ENCODE measurements at regions of chr2 and their contacts with region 1.

Region 1: DNA sequence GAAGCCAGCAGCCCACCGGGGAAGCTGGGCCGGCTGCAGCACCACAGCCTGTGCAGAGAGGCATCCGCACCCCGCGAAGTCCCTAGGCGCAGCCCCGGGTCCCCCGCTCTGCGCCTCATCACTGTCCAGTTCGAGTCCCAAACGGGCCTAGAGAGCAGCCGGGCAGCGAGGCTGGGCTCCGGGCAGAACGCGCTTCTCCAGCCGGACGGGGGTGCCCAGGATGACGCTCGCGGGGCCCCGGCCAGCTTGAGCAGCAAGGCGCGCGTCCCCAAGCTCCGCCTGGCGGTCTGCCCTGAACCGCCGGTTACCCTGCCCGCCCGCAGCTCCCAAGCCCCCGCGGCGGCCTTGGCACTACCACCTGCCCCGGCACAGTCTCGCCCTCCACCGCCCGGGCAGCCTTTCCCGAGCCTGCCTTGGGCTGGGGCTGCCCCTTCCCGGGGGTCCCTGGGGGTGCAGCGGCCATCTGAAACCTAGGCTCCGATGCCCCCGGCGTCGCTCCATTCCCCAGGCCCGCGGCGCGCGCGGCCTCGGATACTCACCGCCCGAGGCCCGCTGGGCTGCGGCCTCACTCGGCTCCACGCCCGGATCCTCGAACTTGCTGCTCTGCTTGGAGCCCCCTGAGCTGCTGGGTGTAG is 591 bp downstream of the SLC16A14 start:
- DNase-seq: peak; percentile 65 to 83 (median 76)
- H3K4me3 ChIP-seq: peak overlapping the region; percentile 61 to 81 (median 77)
- H3K27ac ChIP-seq: peak overlapping the region in 1 of 2 experiments; percentile 7
- H3K4me1 ChIP-seq: peaks cover 5 to 27% (median 22%) of the 10 kb centered on the region in 4 experiments
- H3K27me3 ChIP-seq: peaks cover 0 to 3% (median 0%) of the 10 kb centered on the region in 5 experiments

Region 2: DNA sequence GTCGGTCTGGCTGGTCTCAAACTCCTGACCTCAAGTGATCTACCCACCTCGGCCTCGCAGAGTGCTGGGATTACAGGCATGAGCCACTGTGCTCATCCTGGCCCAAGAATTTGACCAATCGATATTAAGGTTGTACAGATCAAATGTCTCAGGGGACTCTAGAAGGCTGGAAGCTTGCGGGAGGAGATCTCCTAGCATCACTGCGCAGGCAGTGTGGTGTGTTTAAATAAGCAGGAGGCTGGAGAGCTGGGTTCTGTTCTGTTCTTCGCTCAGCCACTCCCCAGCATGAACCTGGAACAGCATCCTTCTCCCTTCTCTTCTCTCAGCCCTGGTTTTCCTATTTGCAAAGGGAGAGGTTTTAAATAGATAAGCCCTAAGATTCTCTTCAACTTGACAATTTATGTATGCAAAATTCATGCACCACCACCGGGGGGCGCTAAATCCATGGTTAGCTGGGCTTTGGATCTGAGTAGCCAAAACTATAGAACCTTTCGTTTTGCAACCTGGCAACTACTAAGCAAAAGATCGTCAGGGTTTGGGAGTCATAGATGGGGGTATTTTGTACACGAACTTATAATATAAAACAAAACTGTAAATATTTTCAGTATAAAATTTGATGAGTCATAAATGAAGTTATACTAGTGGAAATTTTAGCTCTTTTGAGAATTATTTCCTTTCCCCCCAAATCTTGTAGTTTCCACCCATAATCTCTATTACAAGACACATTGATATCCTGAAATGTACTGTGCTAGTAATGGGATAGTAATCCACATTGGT is 60.0 kb before region 1 on chr2:
- CTCF ChIA-PET with region 1: interaction called, 29 read pairs
- POLR2A ChIA-PET with region 1: no interaction called
- DNase-seq: peak; percentile 79 to 90 (median 84)
- H3K4me3 ChIP-seq: peak overlapping the region in 1 of 7 experiments; percentile 39
- H3K27ac ChIP-seq: peak overlapping the region in 1 of 2 experiments; percentile 1
- H3K4me1 ChIP-seq: peaks cover 0 to 8% (median 3%) of the 10 kb centered on the region in 4 experiments
- H3K27me3 ChIP-seq: no peaks in the 10 kb centered on the region

Region 3: GRCh38 chr2:230023309-230023708 is 44.8 kb before region 1 on chr2:
- CTCF ChIA-PET with region 1: interaction called, 10 read pairs
- POLR2A ChIA-PET with region 1: interaction called, 7 read pairs
- DNase-seq: no peak
- H3K4me3 ChIP-seq: no peak overlapping the region
- H3K27ac ChIP-seq: no peak overlapping the region
- H3K4me1 ChIP-seq: no peaks in the 10 kb centered on the region
- H3K27me3 ChIP-seq: no peaks in the 10 kb centered on the region

Region 4: DNA sequence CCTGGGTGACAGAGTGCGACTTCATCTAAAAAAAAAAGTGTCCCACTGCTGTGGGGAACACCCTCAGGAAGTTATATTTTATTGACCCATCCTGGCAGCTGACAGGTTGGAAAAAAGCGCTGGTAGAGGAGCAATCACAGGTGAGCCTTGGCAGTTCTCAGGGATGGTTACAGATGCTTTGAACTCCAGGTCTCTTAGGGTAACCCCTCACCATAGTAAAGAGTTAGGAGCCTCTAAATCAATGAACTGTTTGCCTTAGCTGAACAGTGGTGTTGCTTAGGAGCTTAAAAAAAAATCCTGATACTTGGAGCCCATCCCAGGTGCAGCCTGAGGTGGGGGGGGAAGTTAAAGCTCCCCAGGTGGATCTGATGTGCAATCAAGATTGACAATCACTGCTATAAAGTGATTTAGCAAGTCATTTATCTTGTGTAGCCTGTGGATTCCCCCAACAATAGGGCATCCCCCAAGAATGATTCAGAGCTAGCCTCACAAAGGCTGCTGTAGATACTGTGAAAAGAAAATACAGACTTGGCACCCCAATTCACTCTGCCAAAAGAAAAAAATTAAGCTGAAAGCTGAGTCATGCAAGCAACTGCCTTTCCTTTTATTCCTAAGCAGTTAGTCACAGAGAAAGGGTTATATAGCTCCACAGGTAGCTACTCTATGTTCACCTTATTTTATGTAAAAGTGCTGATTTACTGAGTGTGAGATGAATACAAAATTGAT is 14.2 kb before region 1 on chr2:
- CTCF ChIA-PET with region 1: interaction called, 16 read pairs
- POLR2A ChIA-PET with region 1: interaction called, 3 read pairs
- DNase-seq: peak; percentile 50 to 91 (median 89)
- H3K4me3 ChIP-seq: peak overlapping the region in 1 of 7 experiments; percentile 38
- H3K27ac ChIP-seq: no peak overlapping the region
- H3K4me1 ChIP-seq: peaks cover 0 to 22% (median 14%) of the 10 kb centered on the region in 4 experiments
- H3K27me3 ChIP-seq: no peaks in the 10 kb centered on the region

Region 5: GRCh38 chr2:230124757-230125431 is 56.8 kb after region 1 on chr2:
- CTCF ChIA-PET with region 1: interaction called, 16 read pairs
- POLR2A ChIA-PET with region 1: no interaction called
- DNase-seq: peak; percentile 67 to 93 (median 90)
- H3K4me3 ChIP-seq: peak overlapping the region in 4 of 7 experiments; percentile 9 to 62 (median 28)
- H3K27ac ChIP-seq: no peak overlapping the region
- H3K4me1 ChIP-seq: peaks cover 28 to 40% (median 38%) of the 10 kb centered on the region in 4 experiments
- H3K27me3 ChIP-seq: no peaks in the 10 kb centered on the region

Region 6: DNA sequence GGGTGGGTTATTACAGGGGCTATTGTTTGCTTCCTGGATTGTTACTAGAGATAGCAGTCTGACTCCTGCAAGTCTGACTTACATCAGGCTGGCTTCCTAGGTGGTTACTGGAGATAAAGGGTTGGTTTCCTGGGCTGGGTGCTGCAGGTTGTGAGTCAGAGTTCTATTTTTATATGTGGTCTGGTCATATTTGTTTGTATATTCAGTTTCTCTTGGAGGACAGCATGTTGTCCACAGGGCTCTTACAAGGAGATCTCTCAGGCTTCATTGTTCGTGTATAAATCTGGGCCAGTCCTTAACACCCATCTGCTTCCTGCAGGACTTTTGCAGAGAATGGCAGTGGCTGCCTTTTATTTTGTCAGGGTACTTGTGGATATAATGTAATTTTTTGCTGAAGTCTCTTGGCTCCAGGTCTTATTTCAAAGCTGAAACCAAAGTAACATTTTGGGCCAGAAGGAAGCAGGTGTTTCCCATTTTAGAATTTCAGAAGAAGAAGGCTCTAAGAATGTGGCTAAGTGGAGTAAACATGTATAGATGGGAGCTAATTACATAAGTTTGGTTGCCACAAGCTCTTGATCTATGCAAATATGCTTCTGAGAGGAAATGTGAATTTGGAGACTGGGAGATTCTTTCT is 66.5 kb after region 1 on chr2:
- CTCF ChIA-PET with region 1: interaction called, 13 read pairs
- POLR2A ChIA-PET with region 1: interaction called, 11 read pairs
- DNase-seq: peak; percentile 89 to 98 (median 96)
- H3K4me3 ChIP-seq: no peak overlapping the region
- H3K27ac ChIP-seq: peak overlapping the region; percentile 10 to 72
- H3K4me1 ChIP-seq: peaks cover 13 to 32% (median 23%) of the 10 kb centered on the region in 4 experiments
- H3K27me3 ChIP-seq: no peaks in the 10 kb centered on the region

Region 7: DNA sequence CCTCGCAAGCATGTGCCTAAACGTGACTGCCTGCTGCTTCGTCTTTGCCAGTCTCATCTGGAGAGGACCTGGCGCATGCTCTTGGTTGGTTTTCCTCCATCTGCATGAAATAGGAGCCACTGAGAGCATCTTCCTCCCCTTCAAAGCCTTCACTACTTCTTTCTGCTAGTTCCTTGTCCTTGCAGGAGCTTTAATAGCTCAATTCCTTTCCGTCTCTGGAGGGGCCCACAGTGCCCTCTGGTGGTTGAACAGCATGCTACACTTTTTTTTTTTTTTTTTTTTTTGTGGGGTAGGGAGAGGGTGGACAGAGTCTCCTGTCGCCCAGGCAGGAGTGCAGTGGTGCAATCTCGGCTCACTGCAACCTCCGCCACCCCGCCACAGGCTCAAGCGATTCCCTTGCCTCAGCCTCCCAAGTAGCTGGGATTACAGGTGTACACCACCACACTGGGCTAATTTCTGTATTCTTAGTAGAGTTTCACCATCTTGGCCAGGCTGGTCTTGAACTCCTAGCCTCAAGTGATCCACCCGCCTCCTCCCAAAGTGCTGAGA is 92.1 kb after region 1 on chr2:
- CTCF ChIA-PET with region 1: interaction called, 97 read pairs
- POLR2A ChIA-PET with region 1: no interaction called
- DNase-seq: peak; percentile 68 to 81 (median 72)
- H3K4me3 ChIP-seq: no peak overlapping the region
- H3K27ac ChIP-seq: no peak overlapping the region
- H3K4me1 ChIP-seq: peaks cover 0 to 27% (median 25%) of the 10 kb centered on the region in 4 experiments
- H3K27me3 ChIP-seq: peaks cover 0 to 3% (median 0%) of the 10 kb centered on the region in 5 experiments

Measured in common myeloid progenitor, CD34-positive (primary cell).